ENCODE measurements at regions of chr6 and their contacts with region 1.

Region 1: GRCh38 chr6:44655412-44656342 is 268.2 kb downstream of the CDC5L start:
- DNase-seq: peak; percentile 22 to 25
- ATAC-seq: peak; percentile 78 to 91
- H3K4me3 ChIP-seq: no peak overlapping the region
- H3K27ac ChIP-seq: peak overlapping the region in 1 of 2 experiments; percentile 55; a peak in 2 of 6 replicates
- H3K4me1 ChIP-seq: no peaks in the 10 kb centered on the region
- CTCF ChIP-seq: peak; percentile 70
- EP300 ChIP-seq: no peak
- POLR2A ChIP-seq: no peak
- RAD21 ChIP-seq: peak; percentile 85 to 91

Region 2: GRCh38 chr6:44630125-44631028 is 25.3 kb before region 1 on chr6:
- CTCF ChIA-PET with region 1: interaction called, 12 read pairs
- POLR2A ChIA-PET with region 1: no interaction called
- DNase-seq: peak; percentile 42 to 59
- ATAC-seq: peak; percentile 91 to 95
- H3K4me3 ChIP-seq: no peak overlapping the region
- H3K27ac ChIP-seq: no peak overlapping the region
- H3K4me1 ChIP-seq: no peaks in the 10 kb centered on the region
- CTCF ChIP-seq: peak; percentile 52
- EP300 ChIP-seq: no peak
- POLR2A ChIP-seq: no peak
- RAD21 ChIP-seq: peak; percentile 60 to 64

Region 3: GRCh38 chr6:44642870-44643529 is 12.7 kb before region 1 on chr6:
- CTCF ChIA-PET with region 1: interaction called, 12 read pairs
- POLR2A ChIA-PET with region 1: no interaction called
- DNase-seq: peak in 1 of 2 experiments; percentile 5
- ATAC-seq: peak in 1 of 2 experiments; percentile 47; a peak in 1 of 6 replicates
- H3K4me3 ChIP-seq: no peak overlapping the region
- H3K27ac ChIP-seq: no peak overlapping the region
- H3K4me1 ChIP-seq: no peaks in the 10 kb centered on the region
- CTCF ChIP-seq: no peak
- EP300 ChIP-seq: no peak
- POLR2A ChIP-seq: no peak
- RAD21 ChIP-seq: no peak

Region 4: DNA sequence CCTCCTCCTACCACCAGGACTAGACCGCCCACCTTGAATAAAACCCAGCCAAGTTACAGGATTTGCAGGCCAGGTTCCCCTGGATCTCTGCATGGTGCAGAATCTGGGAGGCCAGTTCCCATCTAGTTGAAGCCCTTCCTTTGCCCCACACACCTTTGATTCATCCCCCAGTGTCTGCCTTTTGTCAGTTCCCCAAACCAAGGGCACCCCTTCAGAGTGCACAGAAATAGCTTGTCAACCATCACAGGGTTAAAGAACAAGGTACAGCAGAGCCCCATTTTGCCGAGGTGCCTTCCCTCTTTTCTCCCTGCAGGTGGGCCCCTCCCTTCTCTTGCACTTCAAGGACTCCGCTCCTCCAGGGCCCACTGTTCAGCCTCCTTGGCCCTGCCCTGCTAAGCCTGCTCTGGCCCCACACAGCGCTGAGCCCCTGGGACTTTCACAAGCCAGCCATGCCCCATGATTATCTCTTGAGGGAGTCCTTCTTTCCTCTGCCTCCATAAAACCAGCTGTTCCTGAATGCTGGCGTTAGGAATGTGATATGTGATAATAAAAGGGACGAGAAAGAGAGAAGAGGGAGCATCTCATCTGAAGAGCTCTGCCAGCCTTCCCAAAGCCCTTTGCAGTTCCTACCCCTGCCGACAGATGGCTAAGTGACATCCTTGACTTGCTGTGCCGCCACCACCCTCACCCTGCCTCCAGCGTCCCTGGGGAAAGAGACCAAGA is 12.2 kb after region 1 on chr6:
- CTCF ChIA-PET with region 1: interaction called, 49 read pairs
- POLR2A ChIA-PET with region 1: no interaction called
- DNase-seq: peak; percentile 18 to 38
- ATAC-seq: peak; percentile 80 to 89; a peak in 5 of 6 replicates
- H3K4me3 ChIP-seq: no peak overlapping the region
- H3K27ac ChIP-seq: peak overlapping the region in 1 of 2 experiments; percentile 35; a peak in 1 of 6 replicates
- H3K4me1 ChIP-seq: peaks cover 9% of the 10 kb centered on the region; the same call in 1 of the 3 replicates
- CTCF ChIP-seq: peak; percentile 31; the same call in 2 of the 3 replicates
- EP300 ChIP-seq: no peak
- POLR2A ChIP-seq: no peak
- RAD21 ChIP-seq: peak; percentile 17 to 39; a peak in 3 of 5 replicates

Region 5: GRCh38 chr6:45310118-45310788 is 654.6 kb after region 1 on chr6:
- CTCF ChIA-PET with region 1: no interaction called
- POLR2A ChIA-PET with region 1: no interaction called
- DNase-seq: no peak
- ATAC-seq: no peak
- H3K4me3 ChIP-seq: no peak overlapping the region
- H3K27ac ChIP-seq: no peak overlapping the region
- H3K4me1 ChIP-seq: no peaks in the 10 kb centered on the region
- CTCF ChIP-seq: no peak
- EP300 ChIP-seq: no peak
- POLR2A ChIP-seq: no peak
- RAD21 ChIP-seq: no peak

Region 6: GRCh38 chr6:45421709-45422502 is 766.2 kb after region 1 on chr6:
- CTCF ChIA-PET with region 1: interaction called, 19 read pairs
- POLR2A ChIA-PET with region 1: no interaction called
- DNase-seq: peak; percentile 11 to 42
- ATAC-seq: peak; percentile 81 to 87
- H3K4me3 ChIP-seq: peak overlapping the region; percentile 60
- H3K27ac ChIP-seq: peak overlapping the region; percentile 58 to 86
- H3K4me1 ChIP-seq: peaks cover 18% of the 10 kb centered on the region
- CTCF ChIP-seq: peak; percentile 29; the same call in 2 of the 3 replicates
- EP300 ChIP-seq: no peak
- POLR2A ChIP-seq: no peak
- RAD21 ChIP-seq: peak in 1 of 2 experiments; percentile 20; a peak in 1 of 5 replicates

Region 7: GRCh38 chr6:45714741-45715507 is 1059.2 kb after region 1 on chr6:
- CTCF ChIA-PET with region 1: interaction called, 14 read pairs
- POLR2A ChIA-PET with region 1: no interaction called
- DNase-seq: peak; percentile 61 to 67
- ATAC-seq: peak; percentile 93 to 97
- H3K4me3 ChIP-seq: no peak overlapping the region
- H3K27ac ChIP-seq: peak overlapping the region; percentile 33 to 75; a peak in 5 of 6 replicates
- H3K4me1 ChIP-seq: peaks cover 20% of the 10 kb centered on the region
- CTCF ChIP-seq: peak; percentile 65
- EP300 ChIP-seq: no peak
- POLR2A ChIP-seq: no peak
- RAD21 ChIP-seq: peak; percentile 90

Region 8: DNA sequence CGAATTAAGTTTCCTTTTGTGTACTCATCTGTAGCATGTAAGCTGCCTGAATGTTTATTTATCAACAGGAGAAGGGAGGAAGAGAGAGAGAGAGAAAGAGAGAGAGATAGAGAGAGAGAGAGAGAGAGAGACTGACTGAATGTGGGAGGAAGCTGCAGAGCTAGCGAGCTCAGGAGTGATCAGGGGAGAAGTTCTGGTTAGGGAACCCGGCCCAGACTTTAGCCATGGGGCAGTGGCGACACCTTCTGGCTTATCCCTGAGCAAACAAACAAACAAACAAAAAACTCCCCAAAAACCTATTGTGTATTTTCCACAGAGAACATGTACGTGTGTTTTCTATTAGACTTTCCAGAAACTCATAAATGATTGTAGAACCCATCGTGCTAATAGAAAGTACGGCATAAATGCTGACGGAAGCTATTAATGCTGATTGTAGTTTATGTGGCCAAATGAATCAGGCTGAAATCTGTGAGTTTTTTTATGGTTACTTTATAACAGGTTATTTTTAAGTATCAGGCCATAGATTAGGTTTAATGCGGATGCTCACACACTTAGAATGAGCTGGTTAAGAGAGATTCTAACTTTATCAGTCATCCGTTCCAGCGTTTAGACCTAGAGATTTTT is 1267.2 kb after region 1 on chr6:
- CTCF ChIA-PET with region 1: interaction called, 38 read pairs
- POLR2A ChIA-PET with region 1: no interaction called
- DNase-seq: peak; percentile 4 to 33
- ATAC-seq: peak; percentile 63 to 73; a peak in 5 of 6 replicates
- H3K4me3 ChIP-seq: no peak overlapping the region
- H3K27ac ChIP-seq: no peak overlapping the region
- H3K4me1 ChIP-seq: no peaks in the 10 kb centered on the region
- CTCF ChIP-seq: peak; percentile 56
- EP300 ChIP-seq: no peak
- POLR2A ChIP-seq: no peak
- RAD21 ChIP-seq: peak; percentile 75 to 76